Dendritic cell treated with granulocyte-macrophage colony-stimulating factor and Interleukin-4, amounts not matched to agents 40 ng/mL and 50 ng/mL, for 4 days (primary cell): ENCODE measurements at regions of chr14 and their contacts with region 1.

Region 1: DNA sequence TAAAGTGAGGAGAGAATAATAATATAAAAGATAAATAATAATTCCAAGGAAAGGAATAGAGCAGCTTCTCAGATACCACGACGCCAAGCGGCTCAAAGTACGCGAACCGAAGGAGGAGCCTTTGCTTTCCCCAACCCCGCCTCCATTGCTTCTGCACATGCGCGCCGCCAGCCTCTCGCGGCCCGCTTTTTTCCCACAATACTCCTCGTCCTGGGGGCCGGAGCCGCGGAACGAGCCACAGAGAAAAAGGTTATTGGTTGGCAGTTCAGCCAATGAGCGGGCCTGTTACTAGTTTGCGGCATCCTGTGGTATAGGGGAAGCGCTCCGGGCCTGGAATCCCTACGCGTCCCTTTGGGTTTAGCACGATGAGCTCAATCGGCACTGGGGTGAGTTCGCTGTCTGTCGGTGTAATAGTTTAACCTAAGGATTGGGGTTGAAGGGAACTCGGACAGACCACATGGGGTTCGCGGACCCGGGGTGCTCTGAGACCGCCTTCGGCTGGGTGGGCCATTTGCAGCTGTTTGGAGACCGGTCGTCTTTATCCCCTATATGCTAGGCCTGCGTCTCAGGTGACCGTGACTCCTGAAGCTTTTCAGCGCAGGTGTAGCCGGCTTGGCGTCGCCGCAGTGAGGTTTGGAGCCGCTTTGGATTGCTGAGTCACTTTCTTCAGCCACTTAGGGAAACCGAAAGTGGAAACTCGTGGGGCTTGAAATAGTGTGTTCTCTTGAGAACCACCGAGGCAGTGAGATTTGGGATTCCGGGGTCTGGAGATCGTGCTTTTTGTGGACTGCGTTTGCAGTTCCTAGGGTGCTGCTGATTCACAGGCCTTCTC is at the start of gene PSMA3:
- H3K4me3 Mint-ChIP-seq: peak within 1 kb of the TSS; percentile 95
- H3K27ac Mint-ChIP-seq: peak within 1 kb of the TSS; percentile 96
- H3K4me1 Mint-ChIP-seq: peaks cover 35% of the 10 kb centered on the region
- H3K27me3 Mint-ChIP-seq: no peaks in the 10 kb centered on the region

Region 2: DNA sequence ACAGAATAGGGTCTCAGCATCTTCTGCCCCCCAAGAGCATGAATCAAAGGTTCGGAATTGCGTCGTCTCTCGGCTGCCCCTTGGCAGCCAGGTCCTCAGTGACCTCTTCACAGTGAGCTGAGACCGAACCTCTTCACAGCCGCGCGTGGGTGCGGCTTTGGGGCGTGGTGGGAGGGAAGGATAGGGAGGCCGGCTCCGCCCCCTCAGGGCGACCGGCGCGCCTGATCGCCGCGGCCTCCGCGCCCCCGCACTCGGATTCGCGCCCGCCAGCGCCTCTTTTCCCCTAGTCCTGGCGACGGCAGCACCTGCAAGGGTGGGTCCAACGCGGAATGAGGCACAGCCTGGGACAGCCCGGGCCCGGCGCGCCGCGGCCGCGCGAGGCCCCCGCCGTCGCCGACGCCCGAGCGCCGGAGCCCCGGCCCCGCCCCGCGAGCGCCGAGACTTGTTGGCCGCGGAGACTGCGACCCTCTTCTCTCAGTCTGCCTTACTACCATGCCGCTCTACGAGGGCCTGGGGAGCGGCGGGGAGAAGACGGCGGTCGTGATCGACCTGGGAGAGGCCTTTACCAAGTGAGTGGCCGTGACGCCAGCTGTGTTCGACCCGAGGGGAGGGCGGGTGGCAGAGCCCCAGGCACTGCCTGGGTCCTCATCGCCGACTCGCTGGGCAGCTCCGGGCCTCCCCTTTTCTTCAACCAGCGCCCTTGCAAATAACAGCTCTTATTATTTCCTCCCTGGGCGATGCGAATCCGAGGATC is 44.9 kb before region 1 on chr14 and contains the start of gene ACTR10:
- intact Hi-C with region 1: loop called (anchors 5 kb)
- H3K4me3 Mint-ChIP-seq: peak within 1 kb of the TSS; percentile 95
- H3K27ac Mint-ChIP-seq: peak within 1 kb of the TSS; percentile 98
- H3K4me1 Mint-ChIP-seq: peaks cover 10% of the 10 kb centered on the region
- H3K27me3 Mint-ChIP-seq: peaks cover 12% of the 10 kb centered on the region

Region 3: DNA sequence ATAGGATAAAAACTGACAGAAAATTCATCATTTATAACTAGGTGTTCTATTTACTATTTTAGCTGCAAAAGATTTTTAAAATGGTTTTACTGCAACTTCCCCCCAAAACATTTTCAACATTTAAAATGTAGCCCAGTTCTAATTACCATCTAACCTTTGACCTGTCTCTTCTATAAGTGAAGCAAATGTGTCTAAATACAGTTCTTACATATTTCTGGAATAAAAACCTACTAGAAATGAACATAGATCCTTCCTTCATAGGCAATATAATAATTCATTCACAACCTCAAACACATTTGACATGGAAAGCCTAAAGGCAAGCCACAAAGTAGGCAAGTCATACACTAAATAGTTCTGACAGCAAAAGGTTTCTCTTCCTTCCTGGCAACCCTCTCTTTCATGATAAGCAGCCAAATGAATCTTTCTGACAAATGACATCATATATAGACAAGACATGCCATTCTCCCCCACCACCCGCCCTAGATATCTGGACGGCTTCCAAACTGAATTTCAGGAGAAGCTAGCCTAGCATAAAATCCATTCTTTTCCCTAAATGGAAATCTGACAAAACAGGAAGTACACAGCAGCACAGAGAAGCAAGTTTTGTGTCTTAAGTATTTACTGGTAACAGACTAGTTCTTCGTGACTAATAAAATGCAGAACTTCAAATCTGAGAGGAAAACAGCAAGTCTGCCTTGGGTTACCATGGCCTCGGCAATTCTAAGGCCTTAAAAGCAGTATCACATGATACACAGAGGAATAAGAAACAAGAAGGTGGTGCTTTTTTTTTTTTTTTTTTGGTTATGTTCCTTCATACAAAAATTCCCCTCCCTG is 36.4 kb after region 1 on chr14:
- intact Hi-C with region 1: loop called (anchors 5 kb)
- H3K4me3 Mint-ChIP-seq: peak overlapping the region; percentile 55
- H3K27ac Mint-ChIP-seq: peak overlapping the region; percentile 96
- H3K4me1 Mint-ChIP-seq: peaks cover 66% of the 10 kb centered on the region
- H3K27me3 Mint-ChIP-seq: no peaks in the 10 kb centered on the region